ENCODE measurements at regions of chr6 and their contacts with region 1.

Region 1: GRCh38 chr6:30102970-30103874 is 9.7 kb downstream of the TRIM31 start:
- DNase-seq: peak; percentile 89
- ATAC-seq: peak; percentile 88

Region 2: DNA sequence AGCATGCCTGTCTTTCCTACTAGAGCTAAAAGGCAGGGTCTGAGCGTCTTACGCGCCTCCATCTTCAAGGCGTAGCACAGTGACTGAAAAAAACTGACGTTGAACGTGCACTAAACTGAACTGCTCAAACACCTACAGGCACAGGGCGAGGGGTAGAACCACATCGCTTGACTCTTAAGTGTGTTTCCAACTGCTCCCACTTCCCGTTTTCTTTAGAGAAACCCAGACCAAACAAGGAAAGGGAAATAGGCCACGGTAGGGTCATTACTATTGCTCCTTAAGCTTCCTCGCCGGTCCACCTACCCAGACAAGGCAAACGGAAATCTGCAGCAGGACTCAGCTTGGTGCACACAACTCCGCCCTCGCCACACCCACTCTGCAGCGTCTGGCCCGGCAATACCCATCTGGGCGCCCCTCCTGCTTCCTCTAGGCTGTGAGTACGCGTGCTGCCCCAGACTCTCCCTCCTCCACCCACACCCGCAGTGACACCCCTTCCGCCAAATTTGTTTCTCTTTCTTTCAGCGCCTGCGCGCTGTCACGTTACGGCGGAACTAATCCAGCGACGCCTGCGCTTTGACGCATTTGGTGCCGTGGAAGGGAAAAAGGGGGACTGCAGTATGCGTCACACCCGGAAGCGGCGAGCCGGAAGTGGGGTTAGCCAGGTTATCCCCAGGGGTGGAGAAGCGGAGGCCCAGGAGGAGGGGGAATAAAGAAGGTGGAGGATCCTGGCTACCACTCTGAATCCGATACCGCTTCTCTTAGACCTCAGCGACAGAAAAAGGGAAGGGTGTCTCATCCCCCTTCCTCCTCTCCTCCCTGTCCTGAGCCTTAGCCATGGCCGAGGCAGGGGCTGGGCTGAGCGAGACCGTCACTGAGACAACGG is 36.4 kb before region 1 on chr6 and contains the start of gene PPP1R11:
- intact Hi-C with region 1: loop called (anchors 2 kb)
- DNase-seq: peak; percentile 99
- ATAC-seq: peak; percentile 99
- total RNA-seq, gene PPP1R11: 44.3 TPM

Region 3: GRCh38 chr6:30130887-30131862 is 28.0 kb after region 1 on chr6:
- intact Hi-C with region 1: loop called (anchors 1 kb)
- DNase-seq: no peak
- ATAC-seq: peak; percentile 74

Region 4: GRCh38 chr6:30169658-30170614 is 66.7 kb after region 1 on chr6:
- intact Hi-C with region 1: loop called (anchors 2 kb)
- DNase-seq: no peak
- ATAC-seq: peak; percentile 69

Region 5: GRCh38 chr6:30304002-30304401 is 200.8 kb after region 1 on chr6:
- intact Hi-C with region 1: no loop called
- DNase-seq: no peak
- ATAC-seq: no peak

Region 6: GRCh38 chr6:30317913-30318589 is 214.8 kb after region 1 on chr6:
- intact Hi-C with region 1: no loop called
- DNase-seq: no peak
- ATAC-seq: no peak

Measured in Right ventricle myocardium inferior (tissue), 1 donor.